ENCODE measurements at regions of chr5 and their contacts with region 1.

Region 1: DNA sequence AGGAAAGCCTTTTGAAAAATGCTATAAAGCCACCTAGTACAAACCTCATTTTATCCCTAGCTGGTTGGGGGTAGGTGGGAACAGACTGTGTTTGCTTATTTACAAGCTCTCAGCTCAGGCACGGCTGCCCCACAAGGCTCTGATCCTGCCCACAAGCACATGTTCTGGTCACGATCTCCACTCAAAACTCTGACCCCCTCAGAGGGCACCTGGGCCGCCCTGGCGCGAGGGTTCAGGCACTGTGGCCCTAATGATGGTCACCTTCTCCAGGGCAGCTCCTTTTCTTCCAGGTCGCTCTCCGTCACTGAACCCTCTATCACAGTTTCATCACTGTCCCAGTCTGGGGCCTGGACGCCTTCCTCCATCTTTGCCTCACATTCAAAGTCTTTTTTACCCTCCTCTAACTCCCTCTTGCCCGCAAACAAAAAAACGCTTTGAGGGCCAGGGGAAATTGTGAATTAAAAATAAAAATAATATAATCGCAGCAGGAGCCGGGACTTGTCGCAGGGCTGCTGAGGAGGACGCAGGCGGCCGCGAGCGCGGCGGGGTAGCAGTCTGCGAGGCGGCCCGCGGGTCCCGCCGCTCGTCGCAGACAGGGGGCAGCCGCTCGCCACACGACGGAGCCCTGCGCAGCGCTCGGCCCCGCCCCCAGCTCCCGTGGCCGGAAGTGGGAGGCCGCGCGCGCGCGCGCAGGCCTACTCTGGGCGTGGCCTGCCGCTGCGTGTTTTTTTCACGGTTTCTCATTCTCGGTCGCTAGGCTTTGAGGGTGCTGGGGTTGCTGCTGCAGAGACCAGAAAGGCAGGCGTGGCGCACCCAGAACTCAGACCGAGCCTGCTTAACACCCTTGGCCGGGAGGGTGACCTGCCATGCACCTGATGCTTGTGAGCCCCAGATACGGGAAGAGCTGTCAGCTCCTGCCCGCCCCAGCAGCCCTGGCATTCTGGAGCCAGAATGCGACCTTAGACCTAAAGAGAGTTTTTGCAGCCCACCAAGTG is at the start of gene ANKRD31:
- DNase-seq: peak; percentile 76 to 96 (median 86)
- ATAC-seq: peak; percentile 97 to 99 (median 98)
- H3K4me3 ChIP-seq: peak within 1 kb of the TSS; percentile 56 to 81
- H3K4me3 Mint-ChIP-seq: peak within 1 kb of the TSS; percentile 84 to 90 (median 89)
- H3K27ac ChIP-seq: peak within 1 kb of the TSS; percentile 89
- H3K27ac Mint-ChIP-seq: peak within 1 kb of the TSS; percentile 96 to 99
- H3K4me1 ChIP-seq: peaks cover 2 to 15% of the 10 kb centered on the region in 2 experiments
- H3K4me1 Mint-ChIP-seq: peaks cover 8 to 18% (median 12%) of the 10 kb centered on the region in 3 donors
- H3K27me3 ChIP-seq: no peaks in the 10 kb centered on the region
- H3K27me3 Mint-ChIP-seq: no peaks in the 10 kb centered on the region
- total RNA-seq, gene ANKRD31: 0.72 to 1.3 (median 0.89) TPM

Region 2: DNA sequence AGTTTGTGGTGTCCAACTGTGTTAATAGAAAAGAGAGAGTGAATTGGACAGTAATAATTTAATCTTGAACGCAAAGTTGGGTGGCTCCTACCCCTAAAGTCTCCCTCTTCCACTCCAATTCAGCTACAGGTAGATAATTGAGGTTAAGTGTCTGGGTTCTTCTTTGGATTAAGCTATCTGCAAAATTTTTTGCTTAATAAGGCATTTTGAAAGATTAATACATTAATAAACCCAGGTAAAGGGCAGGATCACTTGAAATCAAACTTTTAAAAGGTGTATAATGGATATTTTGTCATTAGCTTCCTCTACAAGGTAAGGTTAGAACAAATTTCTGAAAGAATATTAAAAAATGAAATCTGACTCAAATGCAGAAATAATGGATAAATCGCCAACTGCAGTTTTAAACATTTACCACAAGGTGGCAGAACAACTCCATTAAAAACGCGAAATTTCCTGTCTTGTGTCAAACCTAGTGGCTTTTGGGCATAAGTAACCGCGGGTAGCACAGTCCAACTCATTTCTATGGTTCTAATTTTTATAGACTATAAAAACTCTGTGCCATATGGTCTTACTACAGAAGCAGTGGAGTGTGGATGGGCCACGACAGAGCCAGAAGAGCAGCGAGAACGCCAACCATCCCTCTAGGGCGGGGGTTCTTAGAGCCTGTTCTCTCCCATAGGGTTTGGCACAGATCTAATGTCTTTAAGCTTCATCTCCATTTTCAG is 1334.1 kb before region 1 on chr5:
- CTCF ChIA-PET with region 1: no interaction called
- POLR2A ChIA-PET with region 1: interaction called in 1 of 2 experiments, 10 read pairs
- DNase-seq: peak in 4 of 35 experiments; percentile 1 to 71 (median 16)
- ATAC-seq: no peak
- H3K4me3 ChIP-seq: no peak overlapping the region
- H3K4me3 Mint-ChIP-seq: no peak overlapping the region
- H3K27ac ChIP-seq: no peak overlapping the region
- H3K27ac Mint-ChIP-seq: no peak overlapping the region
- H3K4me1 ChIP-seq: no peaks in the 10 kb centered on the region
- H3K4me1 Mint-ChIP-seq: no peaks in the 10 kb centered on the region
- H3K27me3 ChIP-seq: peaks cover 0 to 11% of the 10 kb centered on the region in 2 experiments
- H3K27me3 Mint-ChIP-seq: peaks cover 18 to 19% of the 10 kb centered on the region in 2 donors

Region 3: GRCh38 chr5:74651710-74652109 is 584.9 kb before region 1 on chr5:
- CTCF ChIA-PET with region 1: no interaction called
- POLR2A ChIA-PET with region 1: no interaction called
- DNase-seq: no peak
- ATAC-seq: no peak
- H3K4me3 ChIP-seq: no peak overlapping the region
- H3K4me3 Mint-ChIP-seq: no peak overlapping the region
- H3K27ac ChIP-seq: no peak overlapping the region
- H3K27ac Mint-ChIP-seq: no peak overlapping the region
- H3K4me1 ChIP-seq: no peaks in the 10 kb centered on the region
- H3K4me1 Mint-ChIP-seq: no peaks in the 10 kb centered on the region
- H3K27me3 ChIP-seq: peaks cover 0 to 3% of the 10 kb centered on the region in 2 experiments
- H3K27me3 Mint-ChIP-seq: peaks cover 8% of the 10 kb centered on the region in 2 donors

Region 4: GRCh38 chr5:75049456-75050351 is 186.9 kb before region 1 on chr5:
- CTCF ChIA-PET with region 1: interaction called, 23 to 24 read pairs
- POLR2A ChIA-PET with region 1: interaction called, 3 read pairs
- DNase-seq: peak in 33 of 35 experiments; percentile 29 to 89 (median 58)
- ATAC-seq: peak; percentile 21 to 35 (median 28)
- H3K4me3 ChIP-seq: peak overlapping the region; percentile 1 to 8
- H3K4me3 Mint-ChIP-seq: peak overlapping the region; percentile 87 to 96 (median 94)
- H3K27ac ChIP-seq: no peak overlapping the region
- H3K27ac Mint-ChIP-seq: peak overlapping the region; percentile 91 to 98
- H3K4me1 ChIP-seq: peaks cover 30 to 52% of the 10 kb centered on the region in 2 experiments
- H3K4me1 Mint-ChIP-seq: peaks cover 76 to 85% (median 81%) of the 10 kb centered on the region in 3 donors
- H3K27me3 ChIP-seq: peaks cover 0 to 14% of the 10 kb centered on the region in 2 experiments
- H3K27me3 Mint-ChIP-seq: peaks cover 0 to 7% of the 10 kb centered on the region in 2 donors

Region 5: DNA sequence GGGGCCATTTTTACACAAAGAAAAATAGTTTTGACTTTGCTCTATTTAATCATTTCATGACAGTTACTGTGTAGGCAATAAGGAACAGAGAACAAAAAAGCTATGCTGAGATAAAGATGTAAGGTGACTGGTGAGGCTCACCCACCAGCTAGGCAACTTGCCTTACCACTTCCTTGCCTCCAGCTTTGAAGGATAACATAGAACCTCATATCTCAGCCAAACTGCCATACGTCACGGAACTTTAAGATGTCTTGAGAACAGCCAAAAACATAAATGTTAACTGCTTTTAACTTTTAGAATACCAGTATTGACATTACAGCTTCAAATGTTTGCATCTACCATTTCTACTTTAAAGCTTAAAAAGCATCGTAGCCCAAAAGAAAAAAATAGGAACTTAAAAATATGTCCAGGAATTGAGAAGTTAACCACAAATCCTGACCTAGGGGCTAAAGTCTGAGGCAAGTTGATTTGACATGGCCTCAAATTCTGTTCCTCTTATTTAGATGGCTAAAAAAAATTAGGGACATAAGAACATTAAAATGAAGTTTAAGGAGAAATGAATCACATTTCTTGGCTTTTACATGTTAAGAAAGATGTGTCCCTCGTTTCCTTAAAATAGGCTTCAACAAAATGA is 176.6 kb before region 1 on chr5:
- CTCF ChIA-PET with region 1: interaction called in 1 of 2 experiments, 11 read pairs
- POLR2A ChIA-PET with region 1: interaction called in 1 of 2 experiments, 6 read pairs
- DNase-seq: peak in 32 of 35 experiments; percentile 34 to 84 (median 60)
- ATAC-seq: peak; percentile 91 to 97 (median 96)
- H3K4me3 ChIP-seq: no peak overlapping the region
- H3K4me3 Mint-ChIP-seq: peak overlapping the region; percentile 46 to 55 (median 55)
- H3K27ac ChIP-seq: peak overlapping the region; percentile 86
- H3K27ac Mint-ChIP-seq: peak overlapping the region; percentile 94 to 96
- H3K4me1 ChIP-seq: peaks cover 61 to 70% of the 10 kb centered on the region in 2 experiments
- H3K4me1 Mint-ChIP-seq: peaks cover 81 to 85% (median 81%) of the 10 kb centered on the region in 3 donors
- H3K27me3 ChIP-seq: no peaks in the 10 kb centered on the region
- H3K27me3 Mint-ChIP-seq: peaks cover 0 to 6% of the 10 kb centered on the region in 2 donors

Region 6: GRCh38 chr5:75336625-75337339 is 100.2 kb after region 1 on chr5 and contains the start of gene HMGCR:
- CTCF ChIA-PET with region 1: interaction called in 1 of 2 experiments, 31 read pairs
- POLR2A ChIA-PET with region 1: interaction called in 1 of 2 experiments, 5 read pairs
- DNase-seq: peak; percentile 86 to 99 (median 96)
- ATAC-seq: peak; percentile 94 to 97 (median 96)
- H3K4me3 ChIP-seq: peak within 1 kb of the TSS; percentile 80 to 97
- H3K4me3 Mint-ChIP-seq: no peak within 1 kb of the TSS
- H3K27ac ChIP-seq: peak within 1 kb of the TSS; percentile 83
- H3K27ac Mint-ChIP-seq: peak within 1 kb of the TSS in 1 of 2 donors; percentile 74
- H3K4me1 ChIP-seq: peaks cover 14 to 15% of the 10 kb centered on the region in 2 experiments
- H3K4me1 Mint-ChIP-seq: peaks cover 35 to 36% (median 36%) of the 10 kb centered on the region in 3 donors
- H3K27me3 ChIP-seq: no peaks in the 10 kb centered on the region
- H3K27me3 Mint-ChIP-seq: no peaks in the 10 kb centered on the region
- total RNA-seq, gene HMGCR: 29.6 to 47.2 (median 41.6) TPM

Region 7: GRCh38 chr5:75603371-75603770 is 366.8 kb after region 1 on chr5:
- CTCF ChIA-PET with region 1: no interaction called
- POLR2A ChIA-PET with region 1: no interaction called
- DNase-seq: no peak
- ATAC-seq: no peak
- H3K4me3 ChIP-seq: no peak overlapping the region
- H3K4me3 Mint-ChIP-seq: no peak overlapping the region
- H3K27ac ChIP-seq: no peak overlapping the region
- H3K27ac Mint-ChIP-seq: no peak overlapping the region
- H3K4me1 ChIP-seq: peaks cover 0 to 7% of the 10 kb centered on the region in 2 experiments
- H3K4me1 Mint-ChIP-seq: peaks cover 8 to 16% (median 13%) of the 10 kb centered on the region in 3 donors
- H3K27me3 ChIP-seq: no peaks in the 10 kb centered on the region
- H3K27me3 Mint-ChIP-seq: no peaks in the 10 kb centered on the region

Region 8: GRCh38 chr5:75681125-75681830 is 444.7 kb after region 1 on chr5:
- CTCF ChIA-PET with region 1: interaction called, 3 to 21 read pairs
- POLR2A ChIA-PET with region 1: no interaction called
- DNase-seq: peak in 1 of 35 experiments; percentile 61
- ATAC-seq: peak; percentile 27 to 55 (median 46)
- H3K4me3 ChIP-seq: no peak overlapping the region
- H3K4me3 Mint-ChIP-seq: no peak overlapping the region
- H3K27ac ChIP-seq: no peak overlapping the region
- H3K27ac Mint-ChIP-seq: no peak overlapping the region
- H3K4me1 ChIP-seq: peaks cover 0 to 10% of the 10 kb centered on the region in 2 experiments
- H3K4me1 Mint-ChIP-seq: peaks cover 8 to 15% (median 12%) of the 10 kb centered on the region in 3 donors
- H3K27me3 ChIP-seq: no peaks in the 10 kb centered on the region
- H3K27me3 Mint-ChIP-seq: no peaks in the 10 kb centered on the region

Measured in T-cell (primary cell).